Activated T-helper 2 cell treated with anti-CD3 and anti-CD28 coated beads, Interferon-gamma antibody, Interleukin-2, Interleukin-4, amounts not matched to agents 10 μg/mL and 5 μg/mL and 100 μg/mL, durations not matched to agents 14 hours and 24 hours and 36 hours (primary cell): ENCODE measurements at regions of chr3 and their contacts with region 1.

Region 1: GRCh38 chr3:35965908-35966307 is 326.6 kb downstream of the ARPP21 start:
- DNase-seq: no peak
- H3K4me3 Mint-ChIP-seq: no peak overlapping the region
- H3K27ac Mint-ChIP-seq: no peak overlapping the region
- H3K4me1 Mint-ChIP-seq: no peaks in the 10 kb centered on the region
- H3K27me3 Mint-ChIP-seq: no peaks in the 10 kb centered on the region

Region 2: DNA sequence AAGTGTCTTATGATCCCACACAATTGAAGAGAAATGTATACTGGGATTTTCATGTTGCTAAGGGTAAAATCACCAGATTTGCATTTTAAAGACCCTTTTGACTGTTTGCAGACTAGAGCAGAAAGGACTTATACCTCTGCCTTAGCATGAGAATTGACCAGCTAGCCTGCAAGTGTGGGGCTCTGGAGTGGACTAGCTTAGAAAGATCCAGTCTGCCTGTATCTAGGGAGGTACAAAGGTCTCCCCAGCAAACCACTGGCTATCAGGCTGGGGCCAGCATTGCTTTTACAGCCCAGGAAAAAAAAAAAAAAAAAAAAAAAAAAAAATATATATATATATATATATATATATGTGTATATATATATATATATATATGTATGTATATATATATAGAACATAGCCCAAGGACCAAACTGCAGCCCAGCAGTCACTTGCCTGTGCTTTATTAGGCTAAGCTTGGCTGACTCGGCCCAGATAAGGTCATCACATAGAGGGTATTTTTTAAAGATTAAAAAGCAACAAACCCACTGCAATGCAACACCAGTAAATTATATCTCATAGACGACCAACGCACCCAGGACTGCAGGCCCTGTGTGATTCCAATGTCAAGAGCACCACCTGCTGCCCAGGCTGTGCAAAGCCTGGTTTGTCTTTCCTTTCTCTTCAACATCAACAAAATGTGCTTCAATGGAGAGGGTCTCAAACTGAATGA is 734.8 kb after region 1 on chr3:
- intact Hi-C with region 1: loop called (anchors 10 kb)
- DNase-seq: peak; percentile 17
- H3K4me3 Mint-ChIP-seq: no peak overlapping the region
- H3K27ac Mint-ChIP-seq: no peak overlapping the region
- H3K4me1 Mint-ChIP-seq: no peaks in the 10 kb centered on the region
- H3K27me3 Mint-ChIP-seq: no peaks in the 10 kb centered on the region